ENCODE measurements at regions of chr3 and their contacts with region 1.

Region 1: DNA sequence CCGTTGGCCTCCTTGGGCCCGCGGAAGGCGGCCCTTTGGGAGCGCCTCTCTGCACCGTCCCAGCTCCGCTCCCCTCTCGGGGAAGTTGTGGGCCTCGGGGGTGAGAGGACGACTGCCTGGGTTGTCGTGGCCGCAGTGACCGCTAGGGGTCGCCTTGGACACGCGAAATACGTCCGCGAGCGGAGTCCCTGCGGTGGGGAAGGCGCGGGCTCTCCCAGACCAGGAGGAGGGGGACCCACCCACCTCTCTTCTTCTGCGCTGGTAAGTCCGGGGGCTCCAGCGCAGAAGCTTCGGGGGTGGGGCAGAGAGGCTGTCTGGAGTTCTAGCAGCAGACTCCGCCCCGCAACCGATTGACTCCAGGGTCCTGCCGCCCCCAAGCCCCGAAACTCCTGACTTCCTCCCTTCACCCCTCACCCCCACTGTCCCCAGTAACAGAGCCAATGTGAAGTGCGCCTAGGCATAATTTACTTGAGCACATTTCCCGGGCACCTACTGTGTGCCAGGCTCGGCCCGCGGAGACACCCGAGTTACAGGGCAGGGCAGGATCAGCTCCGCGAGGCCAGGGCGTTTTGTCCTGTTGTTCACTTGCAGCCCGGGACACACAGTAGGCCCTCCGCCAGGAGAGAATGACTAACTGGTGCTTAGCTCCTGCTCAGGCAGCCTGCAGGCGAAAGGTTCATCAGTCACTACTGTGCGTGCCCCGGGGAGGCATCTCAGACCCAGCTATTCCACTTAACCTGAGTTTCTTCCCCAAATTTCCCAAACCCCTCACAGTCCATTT is 32.8 kb downstream of the DNASE1L3 start:
- DNase-seq: peak; percentile 81
- H3K4me3 Mint-ChIP-seq: peak overlapping the region; percentile 73
- H3K27ac Mint-ChIP-seq: no peak overlapping the region
- H3K4me1 Mint-ChIP-seq: peaks cover 12% of the 10 kb centered on the region
- H3K27me3 Mint-ChIP-seq: peaks cover 8% of the 10 kb centered on the region

Region 2: GRCh38 chr3:57692259-57693147 is 485.4 kb before region 1 on chr3 and contains the start of gene DENND6A:
- intact Hi-C with region 1: no loop called
- DNase-seq: peak; percentile 94
- H3K4me3 Mint-ChIP-seq: peak within 1 kb of the TSS; percentile 91
- H3K27ac Mint-ChIP-seq: peak within 1 kb of the TSS; percentile 91
- H3K4me1 Mint-ChIP-seq: peaks cover 30% of the 10 kb centered on the region
- H3K27me3 Mint-ChIP-seq: peaks cover 3% of the 10 kb centered on the region
- total RNA-seq, gene DENND6A: 23.6 and 26.2 TPM in 2 replicates

Region 3: DNA sequence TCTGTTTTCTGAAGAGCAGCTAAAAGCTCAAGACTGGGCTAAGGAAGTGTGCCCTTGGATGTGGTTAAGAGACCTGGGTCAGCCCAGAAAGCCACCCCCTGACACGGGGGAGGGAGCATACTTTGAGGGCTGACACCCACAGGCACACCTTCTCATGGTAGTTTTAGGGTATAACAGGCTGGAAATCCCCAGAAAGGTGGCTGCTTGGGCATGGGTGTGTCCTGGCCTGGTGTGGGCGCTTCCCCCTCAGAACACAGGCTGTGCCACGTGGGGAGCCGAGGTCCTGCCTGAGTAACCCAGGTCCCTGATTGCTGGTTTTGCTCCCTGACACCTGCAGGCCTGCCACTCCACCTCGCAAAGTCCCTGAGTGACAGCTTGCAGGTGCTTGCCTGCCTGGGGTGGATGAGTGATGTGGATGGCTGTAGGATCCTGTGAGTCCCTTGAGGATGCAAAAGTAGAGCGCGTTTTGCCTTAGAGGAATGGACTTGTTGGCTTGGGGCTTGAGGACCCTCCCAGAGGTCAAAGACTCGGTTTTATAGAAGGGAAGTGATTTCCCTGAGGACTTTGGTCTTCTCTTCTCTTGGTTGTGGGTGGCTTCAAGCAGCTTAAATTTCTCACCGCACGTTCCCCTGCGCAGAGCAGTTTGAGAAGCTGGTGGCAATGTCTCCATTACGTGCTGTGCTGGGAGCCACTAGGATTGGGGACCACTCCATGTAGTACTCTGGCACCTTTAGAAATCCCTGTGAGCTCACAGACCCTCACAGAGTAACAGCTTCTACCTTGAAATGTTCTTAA is 61.6 kb before region 1 on chr3:
- intact Hi-C with region 1: loop called (anchors 5 kb)
- DNase-seq: peak; percentile 52
- H3K4me3 Mint-ChIP-seq: peak overlapping the region; percentile 23
- H3K27ac Mint-ChIP-seq: peak overlapping the region; percentile 61
- H3K4me1 Mint-ChIP-seq: peaks cover 34% of the 10 kb centered on the region
- H3K27me3 Mint-ChIP-seq: no peaks in the 10 kb centered on the region